Transverse colon (tissue), 4 donors: ENCODE measurements at regions of chr7 and their contacts with region 1.

Region 1: DNA sequence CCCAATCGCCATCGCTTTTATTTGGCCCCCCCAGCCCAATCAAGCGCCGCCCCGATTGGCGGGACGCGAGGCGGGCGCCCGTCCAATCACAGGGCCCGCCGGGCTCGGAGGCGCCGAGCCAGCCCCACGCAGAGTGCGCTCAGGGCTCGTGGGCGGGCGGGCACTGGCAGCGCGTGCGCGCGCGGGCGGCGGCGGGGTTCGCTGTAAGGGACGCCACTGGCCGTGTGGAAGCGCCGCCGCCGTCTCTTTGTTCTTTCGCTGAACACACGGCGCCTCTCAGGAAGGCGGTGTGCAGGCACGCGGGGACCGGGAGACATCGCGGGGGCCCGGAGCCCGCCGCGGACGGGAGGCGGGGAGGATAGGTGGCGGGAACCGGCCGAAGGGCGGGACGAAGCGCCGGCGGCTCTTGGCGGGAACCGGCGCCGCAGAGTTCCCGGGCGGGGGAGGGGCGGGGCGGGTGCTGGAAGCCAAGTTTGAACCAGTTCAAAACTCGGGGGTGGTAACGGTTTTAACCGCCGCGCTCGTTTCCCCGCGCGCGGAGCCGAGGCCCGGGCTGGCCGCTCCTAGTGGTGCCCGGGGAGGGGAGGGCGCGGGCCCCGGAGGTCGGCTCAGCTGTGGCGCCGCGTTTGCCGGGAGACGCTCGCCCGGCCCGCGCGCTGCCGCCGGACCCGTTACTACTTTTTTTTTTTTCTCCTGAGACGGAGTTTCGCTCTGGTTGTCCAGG is 370 bp upstream of the EZH2 start:
- DNase-seq: peak; percentile 94
- H3K4me3 ChIP-seq: peak overlapping the region; percentile 57 to 98 (median 86)
- H3K27ac ChIP-seq: peak overlapping the region; percentile 95 to 98 (median 96)
- H3K4me1 ChIP-seq: peaks cover 0 to 16% (median 6%) of the 10 kb centered on the region in 4 donors
- H3K27me3 ChIP-seq: no peaks in the 10 kb centered on the region
- CTCF ChIP-seq: no peak
- EP300 ChIP-seq: no peak
- POLR2A ChIP-seq: peak; percentile 69

Region 2: GRCh38 chr7:148939128-148939755 is 54.8 kb after region 1 on chr7:
- in situ Hi-C with region 1: no loop called
- intact Hi-C with region 1: loop called (anchors 10 kb)
- DNase-seq: no peak
- H3K4me3 ChIP-seq: no peak overlapping the region
- H3K27ac ChIP-seq: no peak overlapping the region
- H3K4me1 ChIP-seq: peaks cover 0 to 19% (median 6%) of the 10 kb centered on the region in 4 donors
- H3K27me3 ChIP-seq: no peaks in the 10 kb centered on the region
- CTCF ChIP-seq: no peak
- EP300 ChIP-seq: no peak
- POLR2A ChIP-seq: no peak